Sciatic nerve (tissue), 2 donors: ENCODE measurements at regions of chr20 and their contacts with region 1.

Region 1: GRCh38 chr20:51378171-51378929 is 164.2 kb downstream of the NFATC2 start:
- DNase-seq: peak; percentile 52
- ATAC-seq: no peak

Region 2: GRCh38 chr20:51404298-51405060 is 26.1 kb after region 1 on chr20:
- intact Hi-C with region 1: no loop called
- DNase-seq: peak; percentile 53
- ATAC-seq: peak; percentile 29

Region 3: DNA sequence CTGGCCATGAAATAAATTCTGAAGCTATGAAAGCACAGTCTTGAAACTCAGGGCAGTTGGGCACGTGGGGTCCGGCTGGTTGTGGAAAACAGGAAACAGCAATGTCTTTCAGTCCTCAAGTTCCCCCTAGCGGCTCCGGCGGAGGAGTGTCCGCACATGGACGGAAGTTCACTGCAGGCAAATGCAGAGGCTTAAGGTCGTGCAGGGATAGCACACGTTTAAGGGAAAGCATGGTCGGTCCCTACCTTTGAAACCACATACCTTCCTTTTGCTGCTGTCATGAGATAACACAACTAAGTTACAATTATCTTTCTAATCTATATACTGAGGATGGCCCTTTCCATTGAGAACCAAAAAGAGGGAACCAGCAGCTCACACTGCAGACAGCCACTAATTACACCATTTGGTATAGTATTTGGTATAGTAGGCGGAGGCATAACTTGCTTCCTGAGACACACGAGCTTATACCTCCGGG is 216.7 kb after region 1 on chr20:
- intact Hi-C with region 1: loop called (anchors 5 kb)
- DNase-seq: peak; percentile 94
- ATAC-seq: peak; percentile 98